Heart left ventricle (tissue), 16 donors: ENCODE measurements at regions of chr7 and their contacts with region 1.

Region 1: DNA sequence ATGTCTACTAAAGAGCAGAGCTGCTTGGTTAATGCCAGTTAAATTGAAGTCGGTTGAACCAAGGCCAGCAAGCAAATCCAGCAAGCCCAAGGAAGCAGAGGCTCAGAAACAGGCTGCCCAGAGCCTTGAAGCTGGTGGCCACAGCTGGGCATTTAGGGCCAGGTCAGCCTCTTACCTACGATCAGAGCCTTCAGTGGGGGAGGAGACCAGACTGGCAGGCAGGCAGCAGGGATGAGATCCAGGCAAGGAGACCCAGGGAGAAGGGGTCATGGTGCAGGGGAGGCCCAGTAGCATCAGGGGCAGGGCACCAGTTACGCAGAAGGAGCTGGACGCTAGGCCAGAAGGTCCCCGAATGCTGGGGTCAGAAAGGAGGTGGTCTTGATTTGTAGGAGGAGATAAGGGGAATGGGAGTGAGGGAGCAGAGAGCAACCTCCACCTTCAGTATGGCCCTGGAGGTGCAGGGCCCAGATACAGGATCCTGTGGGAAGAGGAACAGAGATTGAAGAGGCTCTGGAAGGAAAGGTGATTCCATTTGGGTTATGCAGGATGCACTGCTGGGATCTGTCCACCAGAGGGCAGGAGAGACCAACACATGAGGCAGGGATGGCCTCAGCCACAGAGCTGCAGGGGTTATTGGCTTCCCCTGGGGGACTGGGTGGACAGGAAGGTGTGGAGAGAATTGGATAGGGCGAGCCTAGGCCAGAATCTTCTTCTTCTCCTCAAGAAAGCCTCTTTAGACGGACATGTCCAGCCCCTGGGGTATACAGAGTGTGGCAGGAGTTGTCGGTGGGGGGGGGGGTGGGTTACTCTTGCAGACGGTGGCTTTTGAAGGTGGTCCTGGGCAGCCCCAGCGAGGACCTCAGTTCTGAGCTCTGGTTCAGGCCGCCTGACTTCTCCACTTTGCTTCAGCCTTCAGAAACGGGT is 132.6 kb upstream of the PODXL start:
- DNase-seq: peak; percentile 56 to 73 (median 62)
- ATAC-seq: peak; percentile 58 to 74 (median 70)
- H3K4me3 ChIP-seq: no peak overlapping the region
- H3K27ac ChIP-seq: no peak overlapping the region
- H3K4me1 ChIP-seq: peaks cover 0 to 19% (median 6%) of the 10 kb centered on the region in 12 donors
- H3K27me3 ChIP-seq: peaks cover 0 to 41% (median 18%) of the 10 kb centered on the region in 9 donors
- CTCF ChIP-seq: peak; percentile 90 to 96 (median 93)
- POLR2A ChIP-seq: no peak

Region 2: GRCh38 chr7:131843898-131844331 is 154.9 kb after region 1 on chr7:
- intact Hi-C with region 1: loop called in 1 of 10 experiments (anchors 10 kb)
- DNase-seq: peak in 1 of 5 donors; percentile 15
- ATAC-seq: peak in 3 of 4 donors; percentile 47 to 77 (median 71)
- H3K4me3 ChIP-seq: no peak overlapping the region
- H3K27ac ChIP-seq: no peak overlapping the region
- H3K4me1 ChIP-seq: peaks cover 0 to 7% (median 0%) of the 10 kb centered on the region in 12 donors
- H3K27me3 ChIP-seq: peaks cover 0 to 26% (median 4%) of the 10 kb centered on the region in 9 donors
- CTCF ChIP-seq: no peak
- POLR2A ChIP-seq: no peak

Region 3: GRCh38 chr7:132049462-132050304 is 360.7 kb after region 1 on chr7:
- intact Hi-C with region 1: loop called in 3 of 10 experiments (anchors 5 to 10 kb)
- DNase-seq: no peak
- ATAC-seq: no peak
- H3K4me3 ChIP-seq: no peak overlapping the region
- H3K27ac ChIP-seq: no peak overlapping the region
- H3K4me1 ChIP-seq: peaks cover 0 to under 1% (median 0%) of the 10 kb centered on the region in 12 donors
- H3K27me3 ChIP-seq: peaks cover 0 to 5% (median 0%) of the 10 kb centered on the region in 9 donors
- CTCF ChIP-seq: peak; percentile 50 to 67 (median 56)
- POLR2A ChIP-seq: no peak

Region 4: DNA sequence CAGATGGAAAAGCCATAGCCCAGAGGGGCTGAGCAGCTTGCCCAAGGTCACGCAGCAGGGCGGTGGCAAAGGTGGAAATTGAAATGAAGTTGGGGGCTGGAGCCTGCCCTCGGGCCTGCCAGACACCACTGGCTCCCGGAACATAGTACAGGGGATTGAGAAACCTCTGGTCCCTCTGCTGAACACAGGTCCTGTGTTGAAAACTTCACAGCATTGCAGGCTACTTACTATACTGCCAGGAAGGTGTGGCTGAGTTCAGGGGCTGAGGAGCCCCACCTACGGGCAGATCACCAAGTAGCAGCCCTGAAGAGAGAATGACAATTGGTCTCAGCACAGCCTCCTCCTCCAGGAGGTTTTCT is 560.6 kb after region 1 on chr7:
- intact Hi-C with region 1: loop called in 1 of 10 experiments (anchors 10 kb)
- DNase-seq: no peak
- ATAC-seq: peak in 2 of 4 donors; percentile 61 to 62
- H3K4me3 ChIP-seq: no peak overlapping the region
- H3K27ac ChIP-seq: no peak overlapping the region
- H3K4me1 ChIP-seq: peaks cover 0 to 28% (median 10%) of the 10 kb centered on the region in 12 donors
- H3K27me3 ChIP-seq: no peaks in the 10 kb centered on the region
- CTCF ChIP-seq: peak in 8 of 12 donors; percentile 6 to 36 (median 24)
- POLR2A ChIP-seq: no peak